AG04449 (cell line): ENCODE measurements at regions of chr19 and their contacts with region 1.

Region 1: GRCh38 chr19:10695401-10696398 is 5.5 kb upstream of the QTRT1 start:
- DNase-seq: no peak
- H3K4me3 ChIP-seq: peak overlapping the region; percentile 27
- CTCF ChIP-seq: no peak

Region 2: GRCh38 chr19:10403137-10404021 is 292.3 kb before region 1 on chr19 and contains the start of gene CDC37:
- CTCF ChIA-PET with region 1: interaction called, 18 read pairs
- POLR2A ChIA-PET with region 1: interaction called, 3 read pairs
- DNase-seq: peak; percentile 63
- H3K4me3 ChIP-seq: peak within 1 kb of the TSS; percentile 98
- CTCF ChIP-seq: no peak

Region 3: GRCh38 chr19:10478903-10479384 is 216.8 kb before region 1 on chr19:
- CTCF ChIA-PET with region 1: interaction called, 15 read pairs
- POLR2A ChIA-PET with region 1: no interaction called
- DNase-seq: no peak
- H3K4me3 ChIP-seq: peak overlapping the region; percentile 47
- CTCF ChIP-seq: peak; percentile 25

Region 4: DNA sequence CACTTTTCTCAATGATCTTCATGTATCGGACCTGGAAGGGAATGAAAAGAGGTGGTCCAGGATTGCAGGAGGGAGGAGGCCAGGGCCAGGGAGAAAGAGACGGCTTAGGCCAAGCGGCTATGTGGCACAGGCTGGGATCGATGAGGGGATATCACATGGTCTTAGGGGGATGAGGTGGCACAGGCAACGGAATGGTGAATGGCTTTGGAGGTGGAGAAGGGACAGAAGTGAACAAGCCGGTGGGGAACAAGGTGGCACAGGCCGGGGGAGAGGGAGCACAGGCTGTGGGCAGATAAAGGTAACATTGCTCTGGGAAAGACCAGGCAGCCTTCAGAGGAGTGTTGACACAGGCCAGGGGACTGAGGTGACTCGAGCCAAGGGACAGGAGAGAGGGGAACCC is 121.2 kb before region 1 on chr19:
- CTCF ChIA-PET with region 1: interaction called, 178 read pairs
- POLR2A ChIA-PET with region 1: no interaction called
- DNase-seq: no peak
- H3K4me3 ChIP-seq: no peak overlapping the region
- CTCF ChIP-seq: no peak

Region 5: GRCh38 chr19:10593820-10594637 is 101.7 kb before region 1 on chr19:
- CTCF ChIA-PET with region 1: interaction called, 10 read pairs
- POLR2A ChIA-PET with region 1: no interaction called
- DNase-seq: no peak
- H3K4me3 ChIP-seq: no peak overlapping the region
- CTCF ChIP-seq: no peak

Region 6: GRCh38 chr19:10670182-10670581 is 25.5 kb before region 1 on chr19:
- CTCF ChIA-PET with region 1: interaction called, 13 read pairs
- POLR2A ChIA-PET with region 1: no interaction called
- DNase-seq: no peak
- H3K4me3 ChIP-seq: no peak overlapping the region
- CTCF ChIP-seq: no peak

Region 7: DNA sequence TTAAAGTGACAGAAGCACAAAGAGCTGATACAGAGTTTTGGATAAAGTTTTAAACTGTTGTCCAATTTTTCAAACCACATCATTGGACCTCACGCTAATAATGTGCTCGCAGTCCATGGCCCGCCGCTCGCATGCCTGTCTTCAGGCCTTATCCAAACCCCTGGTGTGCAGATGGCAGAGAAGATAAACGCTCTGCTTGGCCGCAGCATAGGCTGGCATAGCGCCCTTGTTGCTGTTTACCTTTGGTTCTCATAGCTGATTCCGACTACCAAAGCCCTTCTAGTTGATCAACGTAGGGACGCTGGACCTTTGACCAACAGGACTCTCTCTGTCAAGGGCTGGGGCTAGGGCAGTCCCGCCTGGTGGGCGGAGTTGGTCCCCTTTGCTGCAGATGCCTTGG is 17.9 kb before region 1 on chr19:
- CTCF ChIA-PET with region 1: interaction called, 13 read pairs
- POLR2A ChIA-PET with region 1: no interaction called
- DNase-seq: no peak
- H3K4me3 ChIP-seq: no peak overlapping the region
- CTCF ChIP-seq: no peak